Activated CD4-positive, alpha-beta T cell treated with anti-CD3 and anti-CD28 coated beads for 36 hours (primary cell): ENCODE measurements at regions of chr11 and their contacts with region 1.

Region 1: DNA sequence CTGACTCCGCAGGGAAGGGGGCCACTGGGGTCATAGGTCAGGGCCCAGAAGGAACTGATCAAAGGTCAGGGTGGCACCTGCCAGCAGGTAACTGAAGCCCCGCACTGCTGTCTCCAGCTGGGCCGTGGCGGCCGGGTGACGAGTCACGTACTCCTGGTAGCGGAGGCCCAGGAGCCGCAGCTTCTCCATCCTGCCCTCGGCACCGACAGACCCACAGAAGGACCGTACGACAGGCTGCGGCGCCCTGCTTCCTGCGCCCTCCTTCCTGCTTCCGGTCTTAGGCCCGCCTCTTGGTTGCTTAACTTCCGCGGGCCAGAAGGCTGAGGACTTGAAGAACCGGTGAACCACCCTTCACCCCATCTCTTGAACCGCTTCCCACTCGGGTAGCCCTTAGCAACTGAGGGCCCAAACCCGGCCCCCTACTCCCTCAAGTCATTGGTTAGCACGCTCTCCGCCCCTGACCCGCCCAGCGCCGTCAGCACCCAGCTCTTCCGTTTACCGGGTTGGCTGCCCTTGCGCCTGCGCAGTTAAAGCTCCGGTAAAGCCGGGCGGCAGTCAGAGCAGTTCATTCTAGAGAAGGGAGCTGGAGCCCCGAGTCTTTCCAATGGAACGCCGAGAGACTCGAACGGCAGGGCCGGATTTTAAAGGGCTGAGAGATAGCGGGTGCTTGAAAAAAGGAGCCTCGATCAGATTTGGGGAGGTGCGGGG is at the start of gene PEX16:
- DNase-seq: peak; percentile 97
- ATAC-seq: peak; percentile 94
- H3K4me3 Mint-ChIP-seq: peak within 1 kb of the TSS; percentile 96
- H3K27ac Mint-ChIP-seq: peak within 1 kb of the TSS; percentile 95
- H3K4me1 Mint-ChIP-seq: peaks cover 31% of the 10 kb centered on the region
- H3K27me3 Mint-ChIP-seq: peaks cover 3% of the 10 kb centered on the region
- total RNA-seq, gene PEX16: 28.1 to 33.4 TPM

Region 2: DNA sequence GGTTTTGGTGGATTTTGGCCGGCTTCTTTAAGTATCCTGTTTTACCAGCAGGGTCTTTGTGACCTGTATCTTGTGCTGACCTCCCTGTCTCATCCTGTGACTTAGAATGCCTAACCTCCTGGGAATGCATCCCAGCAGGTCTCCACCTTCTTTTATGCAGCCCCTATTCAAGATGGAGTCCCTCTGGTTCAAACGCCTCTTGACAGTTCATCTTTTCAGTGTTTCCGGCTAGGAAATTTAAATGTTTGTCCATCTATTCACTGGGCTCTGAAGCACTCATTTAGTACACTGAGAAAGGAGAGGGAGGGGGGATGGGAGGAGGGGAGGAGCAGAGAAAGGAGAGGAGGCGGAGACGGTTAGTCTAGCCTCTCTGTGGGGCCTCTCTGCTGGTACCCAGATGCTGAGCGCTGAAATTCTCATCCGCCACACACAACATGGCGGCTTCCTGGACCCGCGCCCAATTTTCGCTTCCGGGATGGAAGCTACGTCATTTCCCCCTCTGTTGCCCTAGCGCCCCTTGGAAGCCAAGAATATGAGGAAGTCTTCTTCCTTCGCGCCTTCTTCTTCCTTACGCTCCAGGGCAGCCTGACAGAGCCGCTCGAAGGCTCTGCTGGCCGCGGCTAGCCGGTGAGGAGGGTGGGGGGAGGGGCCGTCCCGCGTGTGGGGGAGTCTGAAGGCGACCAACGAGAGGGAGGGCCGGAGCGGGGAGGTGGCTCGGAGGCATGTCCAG is 562.6 kb before region 1 on chr11:
- CTCF ChIA-PET with region 1: no interaction called
- POLR2A ChIA-PET with region 1: no interaction called
- intact Hi-C with region 1: loop called in 1 of 2 experiments (anchors 1 kb)
- DNase-seq: peak; percentile 93
- ATAC-seq: peak; percentile 97
- H3K4me3 Mint-ChIP-seq: peak overlapping the region; percentile 75
- H3K27ac Mint-ChIP-seq: peak overlapping the region; percentile 72
- H3K4me1 Mint-ChIP-seq: peaks cover 21% of the 10 kb centered on the region
- H3K27me3 Mint-ChIP-seq: peaks cover 2% of the 10 kb centered on the region

Region 3: DNA sequence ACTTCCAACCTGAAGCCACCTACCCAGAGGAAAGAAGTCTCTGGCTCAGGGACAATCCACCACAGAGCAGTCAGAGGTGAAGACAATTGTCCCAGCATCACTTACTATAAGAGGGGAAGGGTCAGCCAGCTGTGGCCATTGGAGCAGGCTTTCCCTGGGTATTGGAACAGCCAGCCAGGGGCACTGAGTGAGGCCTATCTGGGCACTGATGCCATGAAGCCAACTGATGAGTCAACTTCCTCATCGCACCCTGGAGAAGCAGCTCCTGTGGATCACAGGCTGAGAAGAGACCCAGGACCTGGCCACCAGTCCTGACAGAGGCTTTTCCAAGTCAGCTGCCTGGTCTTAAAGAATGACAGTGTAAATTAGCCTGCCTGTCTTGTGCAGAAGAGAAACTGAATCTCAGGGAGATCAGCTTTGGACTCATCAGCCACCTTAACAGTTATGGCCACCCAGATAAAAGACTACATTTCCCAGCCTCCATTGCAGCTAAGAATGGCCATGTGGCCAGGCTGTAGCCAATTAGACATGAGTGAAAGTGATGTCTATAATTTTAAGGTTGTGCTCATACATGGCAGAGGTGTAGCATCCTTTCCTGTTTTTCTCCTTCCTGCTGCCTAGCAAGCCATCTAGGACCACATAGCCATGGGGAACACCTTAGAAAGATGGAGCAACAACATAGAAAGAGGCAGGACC is 271.4 kb before region 1 on chr11:
- CTCF ChIA-PET with region 1: no interaction called
- POLR2A ChIA-PET with region 1: no interaction called
- intact Hi-C with region 1: no loop called
- DNase-seq: no peak
- ATAC-seq: peak; percentile 81
- H3K4me3 Mint-ChIP-seq: no peak overlapping the region
- H3K27ac Mint-ChIP-seq: no peak overlapping the region
- H3K4me1 Mint-ChIP-seq: peaks cover 2% of the 10 kb centered on the region
- H3K27me3 Mint-ChIP-seq: peaks cover 16% of the 10 kb centered on the region

Region 4: GRCh38 chr11:45885274-45885920 is 32.4 kb before region 1 on chr11 and contains the start of gene MAPK8IP1:
- CTCF ChIA-PET with region 1: no interaction called
- POLR2A ChIA-PET with region 1: no interaction called
- intact Hi-C with region 1: loop called in 1 of 2 experiments (anchors 1 kb)
- DNase-seq: peak; percentile 68
- ATAC-seq: peak; percentile 89
- H3K4me3 Mint-ChIP-seq: peak within 1 kb of the TSS; percentile 66
- H3K27ac Mint-ChIP-seq: no peak within 1 kb of the TSS
- H3K4me1 Mint-ChIP-seq: peaks cover 8% of the 10 kb centered on the region
- H3K27me3 Mint-ChIP-seq: peaks cover 3% of the 10 kb centered on the region
- total RNA-seq, gene MAPK8IP1: 0.37 to 0.39 TPM

Region 5: DNA sequence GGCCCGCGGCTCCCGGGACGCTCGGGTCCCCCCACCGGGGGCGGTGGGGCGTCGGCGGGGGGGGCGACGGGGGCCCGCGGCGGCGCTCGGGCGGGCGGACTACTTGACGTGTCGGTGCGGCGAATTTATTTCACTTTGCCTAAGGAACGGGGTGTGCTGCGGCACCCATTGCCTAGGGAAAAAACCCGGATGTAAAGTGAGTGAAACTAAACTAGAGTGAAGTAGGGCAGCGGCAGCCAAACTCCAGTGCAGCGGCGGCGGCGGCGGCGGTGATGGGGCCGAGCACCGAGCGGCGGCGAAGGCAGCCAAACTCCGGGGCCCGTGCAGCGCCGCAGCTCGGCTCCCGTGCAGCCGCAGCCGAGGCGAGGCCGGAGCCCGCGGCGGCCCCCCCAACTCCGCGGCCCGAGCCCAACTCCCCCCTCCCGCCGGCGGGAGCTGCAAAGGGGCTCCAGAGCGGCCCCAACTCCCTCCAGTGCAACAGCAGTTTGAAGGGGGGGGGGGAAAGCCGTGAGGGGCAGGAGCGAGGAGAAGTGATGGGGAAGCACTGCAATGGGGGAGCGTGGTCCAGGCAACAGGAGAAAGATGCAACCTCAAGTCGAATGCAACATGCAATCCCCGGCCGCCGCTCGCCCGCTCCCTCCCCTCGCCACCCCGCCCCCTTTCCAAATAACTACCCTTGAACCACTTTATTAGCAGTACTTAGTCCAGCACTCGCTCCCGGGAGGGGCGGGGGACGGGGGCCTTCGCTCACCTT is 204.1 kb after region 1 on chr11:
- CTCF ChIA-PET with region 1: interaction called, 3 read pairs
- POLR2A ChIA-PET with region 1: no interaction called
- intact Hi-C with region 1: loop called (anchors 1 to 5 kb)
- DNase-seq: peak; percentile 83
- ATAC-seq: peak; percentile 39
- H3K4me3 Mint-ChIP-seq: peak overlapping the region; percentile 81
- H3K27ac Mint-ChIP-seq: peak overlapping the region; percentile 86
- H3K4me1 Mint-ChIP-seq: peaks cover 41% of the 10 kb centered on the region
- H3K27me3 Mint-ChIP-seq: no peaks in the 10 kb centered on the region

Region 6: GRCh38 chr11:46936138-46937110 is 1018.6 kb after region 1 on chr11 and contains the start of gene CSTPP1:
- CTCF ChIA-PET with region 1: no interaction called
- POLR2A ChIA-PET with region 1: no interaction called
- intact Hi-C with region 1: loop called in 1 of 2 experiments (anchors 2 kb)
- DNase-seq: peak; percentile 97
- ATAC-seq: peak; percentile 96
- H3K4me3 Mint-ChIP-seq: peak within 1 kb of the TSS; percentile 86
- H3K27ac Mint-ChIP-seq: peak within 1 kb of the TSS; percentile 88
- H3K4me1 Mint-ChIP-seq: peaks cover 16% of the 10 kb centered on the region
- H3K27me3 Mint-ChIP-seq: peaks cover 5% of the 10 kb centered on the region
- total RNA-seq, gene CSTPP1: 17.9 to 18.6 TPM